Right ventricle myocardium inferior (tissue), 1 donor: ENCODE measurements at regions of chr12 and their contacts with region 1.

Region 1: GRCh38 chr12:107760809-107761501 is at the start of gene PRDM4:
- DNase-seq: peak; percentile 97
- ATAC-seq: peak; percentile 99
- total RNA-seq, gene PRDM4: 12.5 TPM

Region 2: DNA sequence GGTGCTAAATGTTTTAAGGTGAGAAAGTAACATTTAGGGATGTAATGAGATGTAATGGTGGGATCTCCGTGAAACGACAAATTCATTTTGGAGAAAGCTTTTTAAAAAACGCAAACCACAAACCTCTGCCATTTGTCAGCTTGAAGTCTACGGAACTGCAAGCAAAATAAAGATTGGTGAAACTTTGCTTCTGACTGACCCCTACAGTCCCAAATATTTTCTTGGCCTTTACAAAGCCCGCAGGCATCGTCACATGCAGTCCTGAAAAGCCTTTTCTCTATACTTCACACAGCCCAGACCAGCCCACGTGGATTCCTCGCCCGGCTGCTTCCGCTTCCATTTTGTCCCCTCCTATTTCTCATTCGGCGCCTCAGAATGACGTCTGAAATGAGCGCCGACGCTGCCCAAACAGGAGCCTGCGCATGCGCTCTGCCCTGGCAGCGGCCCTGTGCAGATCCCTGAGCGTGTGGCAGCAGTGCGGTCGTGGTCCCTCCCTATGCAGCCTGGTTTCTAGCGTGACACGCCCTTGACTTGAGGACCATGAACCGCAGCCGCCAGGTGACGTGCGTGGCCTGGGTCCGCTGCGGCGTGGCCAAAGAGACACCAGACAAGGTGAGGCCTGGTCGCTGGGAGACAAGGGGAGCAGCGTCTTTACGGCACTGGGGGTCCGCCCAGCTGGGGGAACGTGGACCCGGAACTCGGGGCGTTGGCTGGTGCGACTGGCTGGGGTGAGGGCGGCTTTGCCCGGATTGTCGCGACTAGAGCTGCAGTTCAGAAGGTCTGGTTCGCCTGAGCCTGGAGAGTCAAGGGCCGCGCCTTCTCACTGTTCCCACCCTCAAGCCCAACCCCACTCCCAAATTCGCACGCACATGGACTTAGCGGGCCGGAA is 75.4 kb before region 1 on chr12 and contains the start of gene PWP1:
- intact Hi-C with region 1: loop called (anchors 5 kb)
- DNase-seq: peak; percentile 99
- ATAC-seq: peak; percentile 96
- total RNA-seq, gene PWP1: 13.3 TPM

Region 3: DNA sequence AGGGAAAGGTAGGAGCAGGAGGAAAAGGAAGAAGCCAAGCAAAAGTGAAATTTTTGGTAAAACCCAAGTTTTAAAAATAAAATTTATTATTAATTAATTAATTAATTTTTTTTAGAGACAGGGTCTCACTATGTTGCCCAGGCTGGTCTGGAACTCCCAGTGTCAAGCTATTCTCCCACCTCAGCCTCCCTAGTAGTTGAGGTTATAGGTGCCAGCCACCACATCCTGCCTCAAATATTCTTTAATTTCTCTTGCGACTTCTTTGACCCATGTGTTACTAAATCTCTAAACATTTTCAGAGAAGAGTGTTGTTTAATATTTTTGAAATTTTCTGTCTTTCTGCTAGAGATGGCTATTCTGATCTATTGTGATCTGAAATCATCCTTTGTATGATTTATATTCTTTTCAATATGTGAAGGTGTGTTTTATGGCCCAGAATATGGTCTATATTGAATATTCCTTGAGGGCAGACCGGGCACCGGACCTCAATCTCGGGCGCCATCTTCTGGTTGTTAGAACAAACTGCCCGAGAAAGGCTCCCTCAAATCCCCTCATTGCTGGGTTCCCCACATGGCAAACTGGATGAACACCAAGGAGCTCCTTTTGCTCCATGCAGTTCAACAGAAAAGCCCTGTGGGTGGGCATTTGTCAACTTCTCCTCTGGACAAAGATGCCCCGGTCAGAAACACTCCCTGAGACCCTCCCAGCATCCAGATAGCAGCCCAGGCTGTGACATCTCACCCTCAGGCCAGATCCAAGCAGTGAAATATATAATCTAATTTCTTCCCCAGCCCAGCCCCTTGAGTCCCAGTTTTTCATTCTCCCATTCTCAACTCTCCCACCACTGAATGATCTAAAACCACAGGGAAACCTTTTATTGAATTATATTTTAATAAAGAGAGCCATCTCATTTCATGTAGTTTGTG is 124.1 kb after region 1 on chr12:
- intact Hi-C with region 1: loop called (anchors 10 kb)
- DNase-seq: no peak
- ATAC-seq: no peak

Region 4: DNA sequence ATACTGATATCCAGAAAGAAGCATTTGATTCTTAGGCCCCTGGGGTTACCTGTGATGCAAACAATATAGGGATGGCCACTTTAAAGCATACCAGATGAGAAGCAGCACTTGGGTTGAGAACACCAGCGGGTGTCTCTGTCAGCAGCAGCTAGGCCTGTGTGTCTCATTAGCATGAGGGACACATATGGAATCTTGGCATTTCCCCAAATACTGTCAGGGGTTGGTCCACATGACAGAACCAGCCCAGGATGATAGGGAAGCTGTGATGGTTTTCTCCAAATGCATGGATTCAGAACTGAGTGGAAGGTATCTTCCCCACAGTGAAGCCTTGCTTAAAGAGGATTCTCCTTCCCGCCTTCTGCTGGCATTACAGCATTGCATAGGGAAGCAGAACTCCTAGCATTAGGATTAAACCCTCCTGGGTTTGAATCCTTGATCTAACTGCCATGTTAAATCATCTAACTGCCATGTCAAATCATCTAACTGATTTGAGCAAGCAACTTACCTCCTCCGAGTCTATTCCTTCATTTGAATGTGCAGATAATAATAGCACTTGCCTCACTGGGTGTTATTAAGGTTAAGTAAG is 256.6 kb after region 1 on chr12:
- intact Hi-C with region 1: no loop called
- DNase-seq: no peak
- ATAC-seq: no peak